GM13977 (cell line): ENCODE measurements at regions of chr5 and their contacts with region 1.

Region 1: GRCh38 chr5:14628346-14628745 is 36.2 kb upstream of the OTULIN start:
- DNase-seq: peak; percentile 36
- CTCF ChIP-seq: no peak

Region 2: GRCh38 chr5:14286574-14287421 is 341.5 kb before region 1 on chr5:
- in situ Hi-C with region 1: no loop called
- DNase-seq: peak; percentile 33
- CTCF ChIP-seq: no peak

Region 3: DNA sequence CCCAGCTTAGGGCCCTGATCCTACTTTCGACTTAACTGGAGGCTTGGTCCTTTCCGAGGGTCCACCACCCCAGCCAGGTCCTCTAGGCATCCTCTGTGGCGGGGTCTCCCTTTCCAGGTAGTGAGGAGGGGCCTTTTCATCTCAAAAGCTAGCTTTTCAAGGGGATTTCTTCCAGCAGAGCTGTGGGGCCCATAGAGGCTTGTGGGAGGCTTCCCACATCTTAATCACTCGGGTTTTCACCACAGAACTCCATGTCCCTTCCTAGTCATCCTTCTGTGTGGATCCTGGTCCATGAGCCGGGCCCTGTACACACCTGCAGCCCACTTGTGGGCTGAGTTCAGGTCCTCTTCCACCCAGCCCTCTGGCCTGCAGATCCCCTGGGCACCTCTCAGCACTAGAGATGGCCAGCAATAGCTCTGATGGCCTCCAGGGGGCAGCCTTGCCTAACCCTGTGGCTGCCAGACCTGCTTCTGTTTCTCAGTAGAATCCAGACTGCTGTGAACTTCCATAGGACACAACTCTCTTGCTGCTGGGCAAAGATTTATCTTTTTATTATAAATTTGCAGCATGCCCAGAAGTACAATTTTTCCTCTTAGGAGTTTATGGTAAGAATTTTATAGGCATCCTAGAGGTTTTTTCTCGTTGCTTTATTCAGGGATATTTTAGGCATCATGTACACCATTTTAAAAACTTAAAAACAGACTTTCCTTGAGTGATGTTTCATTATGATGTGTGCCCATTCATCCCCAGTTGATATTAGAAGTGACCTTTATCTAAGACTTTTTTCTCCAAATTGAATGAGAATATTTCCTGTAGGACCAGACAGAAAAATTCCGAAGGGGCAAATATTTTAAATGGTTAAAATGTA is 276.3 kb before region 1 on chr5:
- in situ Hi-C with region 1: loop called (anchors 25 kb)
- DNase-seq: peak; percentile 78
- CTCF ChIP-seq: peak; percentile 96

Region 4: DNA sequence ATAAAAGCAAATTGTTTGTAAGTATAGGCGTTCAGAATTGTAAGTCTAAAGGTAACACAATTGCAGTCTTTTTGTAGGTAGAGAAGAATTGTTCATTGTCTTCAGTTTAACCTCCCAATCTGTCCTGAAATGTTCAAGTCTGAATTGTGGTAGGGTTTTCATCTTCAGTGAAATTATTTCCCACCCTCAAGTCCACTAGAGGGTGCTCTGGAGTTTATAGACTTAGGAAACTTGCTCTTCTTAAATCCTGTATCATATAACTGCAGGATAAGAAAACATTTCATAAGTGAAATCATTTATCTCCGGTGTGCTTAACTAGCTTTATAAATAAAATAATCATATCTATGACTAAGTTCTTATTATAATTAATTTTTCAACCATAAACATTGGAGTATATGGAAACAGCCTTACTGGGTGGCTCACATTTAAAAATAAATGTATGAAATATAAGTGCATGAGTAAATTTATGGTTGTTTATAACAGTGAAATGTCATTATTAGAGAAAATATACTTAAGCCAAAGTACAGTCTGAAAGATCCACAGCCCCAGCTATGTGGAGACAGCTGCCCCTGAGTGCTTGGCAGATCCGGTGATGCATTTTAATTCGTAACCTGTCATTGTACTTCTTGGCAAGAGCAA is 229.2 kb before region 1 on chr5:
- in situ Hi-C with region 1: no loop called
- DNase-seq: peak; percentile 55
- CTCF ChIP-seq: peak; percentile 59